T-cell (primary cell): ENCODE measurements at regions of chrX and their contacts with region 1.

Region 1: GRCh38 chrX:41781502-41781901 is 57.5 kb downstream of the GPR82 start:
- DNase-seq: peak in 3 of 35 experiments; percentile 7 to 62 (median 18)
- ATAC-seq: peak in 2 of 4 experiments; percentile 52 to 59
- H3K4me3 ChIP-seq: no peak overlapping the region
- H3K4me3 Mint-ChIP-seq: no peak overlapping the region
- H3K27ac ChIP-seq: no peak overlapping the region
- H3K27ac Mint-ChIP-seq: peak overlapping the region in 1 of 2 donors; percentile 19
- H3K4me1 ChIP-seq: no peaks in the 10 kb centered on the region
- H3K4me1 Mint-ChIP-seq: peaks cover 7 to 20% (median 16%) of the 10 kb centered on the region in 3 donors
- H3K27me3 ChIP-seq: no peaks in the 10 kb centered on the region
- H3K27me3 Mint-ChIP-seq: peaks cover 0 to 3% of the 10 kb centered on the region in 2 donors

Region 2: DNA sequence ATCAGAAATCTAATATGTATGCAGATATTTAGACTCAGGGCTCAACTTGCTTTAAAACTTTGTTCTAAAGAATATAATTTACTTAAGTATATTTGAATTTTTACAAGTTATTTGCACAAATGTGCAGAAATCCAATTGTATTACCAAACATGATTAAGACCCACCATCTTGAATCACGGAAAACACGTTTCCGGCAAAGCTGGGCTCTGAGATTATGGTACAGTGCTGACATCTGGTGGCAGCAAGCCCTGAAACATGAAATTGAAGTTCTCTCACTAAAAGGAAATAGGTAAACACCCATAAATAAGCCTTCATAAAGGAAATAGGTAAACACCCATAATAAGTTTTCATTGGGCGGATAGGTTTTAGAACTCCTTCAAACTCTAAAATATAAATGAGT is 1776.3 kb after region 1 on chrX:
- CTCF ChIA-PET with region 1: interaction called, 3 to 11 read pairs
- POLR2A ChIA-PET with region 1: no interaction called
- DNase-seq: peak; percentile 15 to 78 (median 48)
- ATAC-seq: peak; percentile 38 to 63 (median 48)
- H3K4me3 ChIP-seq: no peak overlapping the region
- H3K4me3 Mint-ChIP-seq: no peak overlapping the region
- H3K27ac ChIP-seq: no peak overlapping the region
- H3K27ac Mint-ChIP-seq: no peak overlapping the region
- H3K4me1 ChIP-seq: no peaks in the 10 kb centered on the region
- H3K4me1 Mint-ChIP-seq: peaks cover 0 to 7% (median 1%) of the 10 kb centered on the region in 3 donors
- H3K27me3 ChIP-seq: no peaks in the 10 kb centered on the region
- H3K27me3 Mint-ChIP-seq: peaks cover 0 to 17% of the 10 kb centered on the region in 2 donors